Right cardiac atrium (tissue), 5 donors: ENCODE measurements at regions of chr3 and their contacts with region 1.

Region 1: GRCh38 chr3:101229681-101230080 is 90.7 kb downstream of the IMPG2 start:
- DNase-seq: no peak
- ATAC-seq: no peak
- H3K4me3 ChIP-seq: no peak overlapping the region
- H3K27ac ChIP-seq: no peak overlapping the region
- H3K4me1 ChIP-seq: no peaks in the 10 kb centered on the region
- H3K27me3 ChIP-seq: no peaks in the 10 kb centered on the region

Region 2: DNA sequence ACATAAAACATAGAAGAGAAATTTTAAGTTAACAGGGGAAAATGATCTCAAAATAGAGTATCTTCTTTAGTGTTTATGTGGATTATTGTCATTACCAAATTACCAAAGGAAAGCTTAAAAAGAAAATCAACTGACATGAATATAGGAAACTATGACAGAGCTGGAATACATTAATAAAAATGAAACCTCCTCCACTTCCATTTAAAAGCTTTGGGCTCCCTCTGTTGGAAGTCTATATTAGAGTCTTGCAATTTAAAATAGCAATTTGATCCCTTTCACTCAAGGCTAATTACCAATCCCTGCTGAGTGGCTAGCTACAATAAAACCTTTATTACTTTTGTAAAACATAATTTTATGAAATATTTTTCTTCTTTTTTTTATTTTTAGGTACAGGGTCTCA is 152.1 kb after region 1 on chr3:
- intact Hi-C with region 1: loop called in 2 of 4 experiments (anchors 10 kb)
- DNase-seq: no peak
- ATAC-seq: peak in 1 of 2 donors; percentile 30
- H3K4me3 ChIP-seq: no peak overlapping the region
- H3K27ac ChIP-seq: no peak overlapping the region
- H3K4me1 ChIP-seq: peaks cover 10% of the 10 kb centered on the region
- H3K27me3 ChIP-seq: no peaks in the 10 kb centered on the region

Region 3: GRCh38 chr3:101423984-101424888 is 194.6 kb after region 1 on chr3:
- intact Hi-C with region 1: no loop called
- DNase-seq: peak in 1 of 3 donors; percentile 23
- ATAC-seq: peak in 1 of 2 donors; percentile 21
- H3K4me3 ChIP-seq: no peak overlapping the region
- H3K27ac ChIP-seq: no peak overlapping the region
- H3K4me1 ChIP-seq: no peaks in the 10 kb centered on the region
- H3K27me3 ChIP-seq: no peaks in the 10 kb centered on the region

Region 4: GRCh38 chr3:101685870-101686412 is 456.3 kb after region 1 on chr3:
- intact Hi-C with region 1: no loop called
- DNase-seq: no peak
- ATAC-seq: peak; percentile 14 to 30
- H3K4me3 ChIP-seq: peak overlapping the region; percentile 97
- H3K27ac ChIP-seq: peak overlapping the region; percentile 94
- H3K4me1 ChIP-seq: no peaks in the 10 kb centered on the region
- H3K27me3 ChIP-seq: no peaks in the 10 kb centered on the region